ENCODE measurements at regions of chr20 and their contacts with region 1.

Region 1: DNA sequence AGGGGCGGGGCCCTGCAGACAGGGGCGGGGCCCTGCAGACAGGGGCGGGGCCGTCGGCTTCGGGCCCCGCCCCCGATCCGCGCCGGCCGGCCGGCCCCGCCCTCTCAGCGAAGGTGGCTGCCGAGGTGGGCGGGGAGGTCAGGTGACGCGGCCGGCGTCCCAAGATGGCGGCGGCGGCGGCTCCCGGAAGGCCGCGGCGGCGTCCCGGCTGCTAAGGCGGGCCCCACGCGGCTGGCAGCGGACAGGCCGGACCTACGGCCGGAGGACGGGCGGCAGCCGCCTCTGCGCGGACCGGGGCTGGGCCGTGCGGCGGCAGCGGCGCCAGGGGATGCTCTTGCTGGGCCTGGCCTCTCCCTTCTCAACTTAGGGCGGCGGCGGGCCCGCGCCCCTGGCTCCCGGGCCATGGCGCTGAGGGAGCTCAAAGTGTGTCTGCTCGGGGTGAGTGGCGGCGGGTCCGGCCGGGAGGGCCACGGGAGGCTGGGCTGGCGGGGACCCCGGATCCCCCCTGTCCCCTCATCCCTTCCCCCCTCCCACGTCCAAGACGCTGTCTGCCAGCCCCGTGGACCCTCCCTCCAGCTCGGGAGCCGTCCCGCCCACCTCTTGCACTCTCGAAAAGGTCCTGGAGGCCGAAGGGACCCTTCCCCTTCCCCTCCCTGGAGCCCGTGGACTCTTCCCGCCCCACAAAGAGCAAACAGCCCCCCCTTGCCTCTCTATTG is at the start of gene RAB22A:
- DNase-seq: peak; percentile 74 to 89 (median 84)
- ATAC-seq: peak; percentile 81
- H3K4me3 ChIP-seq: peak within 1 kb of the TSS; percentile 78
- H3K4me3 Mint-ChIP-seq: peak within 1 kb of the TSS; percentile 81 to 97 (median 92)
- H3K27ac ChIP-seq: peak within 1 kb of the TSS; percentile 99
- H3K27ac Mint-ChIP-seq: peak within 1 kb of the TSS; percentile 92 to 99 (median 97)
- H3K4me1 ChIP-seq: peaks cover 38 to 66% of the 10 kb centered on the region in 2 donors
- H3K4me1 Mint-ChIP-seq: peaks cover 23 to 84% (median 67%) of the 10 kb centered on the region in 7 donors
- H3K27me3 ChIP-seq: no peaks in the 10 kb centered on the region
- H3K27me3 Mint-ChIP-seq: no peaks in the 10 kb centered on the region
- total RNA-seq, gene RAB22A: 17.3 to 24.7 (median 17.8) TPM

Region 2: GRCh38 chr20:57622579-57623377 is 687.0 kb before region 1 on chr20:
- CTCF ChIA-PET with region 1: no interaction called
- POLR2A ChIA-PET with region 1: no interaction called
- intact Hi-C with region 1: loop called (anchors 2 to 5 kb)
- DNase-seq: peak in 8 of 9 donors; percentile 45 to 71 (median 66)
- ATAC-seq: peak; percentile 41
- H3K4me3 ChIP-seq: no peak overlapping the region
- H3K4me3 Mint-ChIP-seq: peak overlapping the region; percentile 10 to 89 (median 56)
- H3K27ac ChIP-seq: no peak overlapping the region
- H3K27ac Mint-ChIP-seq: peak overlapping the region; percentile 67 to 93 (median 84)
- H3K4me1 ChIP-seq: peaks cover 50 to 75% of the 10 kb centered on the region in 2 donors
- H3K4me1 Mint-ChIP-seq: peaks cover 48 to 98% (median 78%) of the 10 kb centered on the region in 7 donors
- H3K27me3 ChIP-seq: no peaks in the 10 kb centered on the region
- H3K27me3 Mint-ChIP-seq: peaks cover 0 to 20% (median 0%) of the 10 kb centered on the region in 5 donors

Region 3: DNA sequence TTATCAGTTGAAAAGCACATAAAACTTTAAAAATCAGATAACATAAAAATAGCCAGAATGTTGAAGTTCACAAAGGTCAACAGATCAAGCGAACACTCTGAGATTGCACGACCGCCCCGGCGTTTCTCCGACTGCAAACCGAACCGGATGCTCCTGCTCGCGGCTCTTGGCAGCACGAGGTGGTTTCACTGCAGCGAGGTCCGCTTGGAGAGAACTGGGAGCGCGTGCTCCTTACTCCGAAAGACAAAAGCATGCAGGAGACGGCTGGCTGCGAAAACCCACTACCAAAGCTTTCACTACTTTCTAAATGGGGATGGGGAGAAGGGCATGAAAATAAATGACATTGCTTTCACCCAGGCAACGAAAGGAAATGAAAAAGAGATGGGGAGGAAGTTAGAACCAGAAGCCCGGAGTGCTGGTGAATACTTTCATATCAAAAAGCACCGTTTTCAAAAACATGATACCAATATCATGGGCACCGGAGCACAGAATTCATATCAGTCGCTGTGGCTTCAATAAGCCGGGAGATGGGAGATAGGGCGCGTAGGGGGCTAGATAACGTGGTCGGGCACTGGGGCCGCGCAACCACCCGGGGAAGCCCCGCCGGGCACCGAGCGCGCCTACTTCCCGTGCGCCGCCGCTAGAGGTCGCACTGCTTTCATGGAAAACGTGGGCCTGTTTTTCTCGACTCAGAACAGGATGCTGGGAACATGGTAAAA is 73.0 kb before region 1 on chr20:
- CTCF ChIA-PET with region 1: no interaction called
- POLR2A ChIA-PET with region 1: no interaction called
- intact Hi-C with region 1: loop called (anchors 1 kb)
- DNase-seq: peak; percentile 62 to 90 (median 80)
- ATAC-seq: peak; percentile 96
- H3K4me3 ChIP-seq: peak overlapping the region; percentile 65
- H3K4me3 Mint-ChIP-seq: peak overlapping the region; percentile 77 to 94 (median 92)
- H3K27ac ChIP-seq: peak overlapping the region; percentile 76
- H3K27ac Mint-ChIP-seq: peak overlapping the region; percentile 71 to 96 (median 91)
- H3K4me1 ChIP-seq: no peaks in the 10 kb centered on the region
- H3K4me1 Mint-ChIP-seq: peaks cover 2 to 25% (median 17%) of the 10 kb centered on the region in 7 donors
- H3K27me3 ChIP-seq: no peaks in the 10 kb centered on the region
- H3K27me3 Mint-ChIP-seq: no peaks in the 10 kb centered on the region

Region 4: GRCh38 chr20:58360900-58361299 is 51.2 kb after region 1 on chr20:
- CTCF ChIA-PET with region 1: no interaction called
- POLR2A ChIA-PET with region 1: no interaction called
- intact Hi-C with region 1: no loop called
- DNase-seq: no peak
- ATAC-seq: no peak
- H3K4me3 ChIP-seq: no peak overlapping the region
- H3K4me3 Mint-ChIP-seq: no peak overlapping the region
- H3K27ac ChIP-seq: no peak overlapping the region
- H3K27ac Mint-ChIP-seq: no peak overlapping the region
- H3K4me1 ChIP-seq: no peaks in the 10 kb centered on the region
- H3K4me1 Mint-ChIP-seq: no peaks in the 10 kb centered on the region
- H3K27me3 ChIP-seq: no peaks in the 10 kb centered on the region
- H3K27me3 Mint-ChIP-seq: no peaks in the 10 kb centered on the region

Region 5: DNA sequence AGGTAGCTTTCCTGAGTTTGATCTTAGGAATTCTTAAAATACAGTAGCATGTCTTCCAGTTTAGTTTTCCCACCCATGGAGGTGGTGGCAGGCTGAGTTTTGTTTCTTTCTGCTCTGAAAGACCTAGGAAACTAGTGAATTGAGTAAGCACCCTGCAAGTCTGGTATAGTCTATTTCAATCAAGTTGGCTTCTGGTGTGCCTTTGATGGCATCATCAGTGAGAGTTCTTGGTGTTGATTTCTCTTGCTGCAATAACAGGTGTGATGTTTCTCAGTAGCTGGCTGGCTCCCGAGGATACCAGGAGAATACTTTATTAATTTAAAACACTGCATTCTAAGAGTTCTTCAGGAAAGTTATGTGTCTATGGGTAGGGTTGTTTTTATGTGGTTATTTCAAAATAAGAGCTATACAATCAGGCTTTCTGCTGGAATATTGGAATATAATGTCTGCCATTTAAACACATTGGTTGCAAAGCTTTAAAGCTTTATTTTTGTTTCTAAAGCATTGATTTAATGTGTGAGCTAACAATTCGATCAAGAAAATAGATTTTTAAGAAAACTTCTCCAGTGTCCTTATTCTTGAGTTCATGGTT is 98.3 kb after region 1 on chr20:
- CTCF ChIA-PET with region 1: no interaction called
- POLR2A ChIA-PET with region 1: interaction called, 3 read pairs
- intact Hi-C with region 1: loop called in 1 of 2 experiments (anchors 5 kb)
- DNase-seq: peak in 7 of 9 donors; percentile 19 to 47 (median 37)
- ATAC-seq: peak; percentile 77
- H3K4me3 ChIP-seq: peak overlapping the region; percentile 25
- H3K4me3 Mint-ChIP-seq: peak overlapping the region; percentile 62 to 84 (median 73)
- H3K27ac ChIP-seq: peak overlapping the region; percentile 60
- H3K27ac Mint-ChIP-seq: peak overlapping the region in 8 of 9 donors; percentile 79 to 93 (median 89)
- H3K4me1 ChIP-seq: peaks cover 21 to 35% of the 10 kb centered on the region in 2 donors
- H3K4me1 Mint-ChIP-seq: peaks cover 13 to 44% (median 39%) of the 10 kb centered on the region in 7 donors
- H3K27me3 ChIP-seq: no peaks in the 10 kb centered on the region
- H3K27me3 Mint-ChIP-seq: no peaks in the 10 kb centered on the region

Region 6: DNA sequence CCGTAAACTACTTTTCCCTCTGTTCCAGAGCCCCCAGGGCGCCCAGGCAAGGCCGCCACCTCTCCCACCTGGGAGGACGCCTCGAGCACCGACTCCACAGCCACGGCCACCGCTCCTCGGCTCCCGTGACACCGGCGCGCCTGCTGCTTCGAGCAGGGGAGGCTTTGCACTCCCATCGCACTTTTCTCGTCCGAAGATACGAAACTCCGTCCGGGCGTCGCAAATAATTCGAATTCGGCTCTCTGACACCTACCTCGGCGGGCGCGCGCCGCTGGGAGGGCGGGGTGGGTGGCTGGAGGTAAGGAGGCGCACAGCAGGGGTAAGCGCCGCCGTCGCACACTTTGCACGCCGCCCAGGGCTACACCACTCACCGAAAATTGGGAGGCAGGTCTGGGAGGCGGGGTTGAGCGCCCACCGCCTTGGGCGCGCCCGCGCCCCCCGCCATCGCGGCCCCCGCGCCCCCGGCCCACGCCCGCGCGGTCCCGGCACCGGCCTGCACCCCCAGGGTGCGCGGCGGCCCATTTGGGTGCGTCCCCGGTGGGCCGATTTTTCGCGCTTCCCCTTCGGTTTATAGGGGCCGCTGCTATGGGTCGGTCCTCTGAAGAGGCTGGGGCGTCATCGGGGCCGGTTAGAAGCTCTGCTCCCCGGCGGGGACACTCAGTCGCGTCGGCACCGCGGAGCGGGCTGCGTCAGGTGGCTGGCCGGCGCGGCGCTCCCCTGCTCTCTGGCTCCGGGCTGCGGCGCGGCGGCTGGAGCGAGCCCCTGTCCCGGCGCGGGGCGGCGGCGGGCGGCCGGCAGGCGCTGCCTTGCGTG is 579.0 kb after region 1 on chr20:
- CTCF ChIA-PET with region 1: no interaction called
- POLR2A ChIA-PET with region 1: no interaction called
- intact Hi-C with region 1: loop called (anchors 1 to 5 kb)
- DNase-seq: peak; percentile 64 to 91 (median 86)
- ATAC-seq: peak; percentile 76
- H3K4me3 ChIP-seq: peak overlapping the region; percentile 68
- H3K4me3 Mint-ChIP-seq: peak overlapping the region; percentile 81 to 94 (median 87)
- H3K27ac ChIP-seq: peak overlapping the region; percentile 95
- H3K27ac Mint-ChIP-seq: peak overlapping the region; percentile 67 to 97 (median 90)
- H3K4me1 ChIP-seq: peaks cover 4 to 6% of the 10 kb centered on the region in 2 donors
- H3K4me1 Mint-ChIP-seq: peaks cover 15 to 46% (median 37%) of the 10 kb centered on the region in 7 donors
- H3K27me3 ChIP-seq: no peaks in the 10 kb centered on the region
- H3K27me3 Mint-ChIP-seq: peaks cover 0 to 3% (median 0%) of the 10 kb centered on the region in 5 donors

Region 7: DNA sequence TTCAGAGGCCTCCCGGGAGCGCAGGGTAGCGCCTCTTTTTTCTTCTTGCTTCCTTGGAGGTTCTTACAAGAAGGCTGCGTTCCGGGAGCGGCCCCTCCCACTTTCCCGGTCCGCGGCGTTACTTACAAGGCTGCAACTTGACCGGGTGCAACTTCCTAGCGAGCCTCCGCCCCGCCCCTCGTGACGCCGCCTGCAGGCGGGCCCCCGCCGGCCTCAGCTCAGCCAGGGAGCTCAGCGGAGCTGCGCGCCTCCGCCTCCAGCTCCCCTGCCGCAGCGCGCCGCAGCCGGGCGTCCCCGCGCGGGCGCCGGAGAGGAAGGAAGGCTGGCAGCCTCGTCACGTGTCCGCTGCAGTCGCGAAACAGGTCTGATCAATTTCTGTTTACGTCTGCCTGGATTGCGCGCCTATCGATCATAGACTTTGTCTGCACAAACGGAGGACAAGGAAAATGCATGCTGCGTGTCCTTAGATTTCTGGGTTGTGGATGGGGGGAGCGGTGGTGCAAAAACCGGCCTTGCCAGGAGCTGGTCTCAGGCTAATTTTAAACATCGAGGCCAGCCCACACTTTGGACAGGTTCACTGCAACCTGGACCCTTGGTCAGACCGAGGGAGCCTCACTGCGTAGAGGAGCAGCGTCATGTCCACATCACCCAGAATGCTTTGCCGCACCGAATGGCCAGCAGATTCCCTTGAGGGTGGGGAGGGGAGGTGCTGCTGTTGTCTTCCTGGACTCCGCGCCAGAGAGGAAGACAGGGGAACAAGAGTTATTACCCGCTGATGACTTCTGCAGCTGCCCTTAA is 1630.6 kb after region 1 on chr20 and contains the starts of genes FAM217B and PPP1R3D:
- CTCF ChIA-PET with region 1: no interaction called
- POLR2A ChIA-PET with region 1: no interaction called
- intact Hi-C with region 1: loop called in 1 of 2 experiments (anchors 10 kb)
- DNase-seq: peak; percentile 82 to 95 (median 86)
- ATAC-seq: peak; percentile 98
- H3K4me3 ChIP-seq: peak within 1 kb of the TSS; percentile 99
- H3K4me3 Mint-ChIP-seq: peak within 1 kb of the TSS; percentile 96 to 99 (median 98)
- H3K27ac ChIP-seq: peak within 1 kb of the TSS; percentile 79
- H3K27ac Mint-ChIP-seq: peak within 1 kb of the TSS; percentile 95 to 99 (median 97)
- H3K4me1 ChIP-seq: peaks cover 17 to 23% of the 10 kb centered on the region in 2 donors
- H3K4me1 Mint-ChIP-seq: peaks cover 29 to 65% (median 49%) of the 10 kb centered on the region in 7 donors
- H3K27me3 ChIP-seq: no peaks in the 10 kb centered on the region
- H3K27me3 Mint-ChIP-seq: no peaks in the 10 kb centered on the region
- total RNA-seq, gene FAM217B: 19.3 to 47.4 (median 32.6) TPM
- total RNA-seq, gene PPP1R3D: 4.1 to 11.8 (median 7.5) TPM

Measured in naive thymus-derived CD4-positive, alpha-beta T cell (primary cell).